Mammary epithelial cell (primary cell): ENCODE measurements at regions of chr3 and their contacts with region 1.

Region 1: DNA sequence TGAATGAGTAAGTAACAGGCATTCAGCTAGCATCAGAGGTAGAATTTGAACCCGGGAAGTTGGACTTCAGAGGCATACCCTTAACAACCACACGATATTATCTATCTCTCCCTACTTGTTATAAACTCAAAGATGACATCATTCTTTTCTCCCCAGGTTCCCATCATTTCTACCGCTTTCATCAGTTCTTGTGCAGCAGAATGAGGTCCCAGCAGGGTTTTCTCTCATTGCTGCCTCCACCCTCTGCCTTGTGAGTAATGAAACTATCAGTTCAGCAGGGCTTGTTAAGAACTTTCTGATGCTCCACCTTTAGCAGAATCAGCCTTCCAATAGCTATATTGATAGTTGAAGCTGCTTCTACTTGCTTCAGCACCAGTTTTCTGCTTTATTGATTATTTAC is 487.5 kb upstream of the KCNMB2 start:
- DNase-seq: no peak
- H3K4me3 ChIP-seq: no peak overlapping the region
- H3K27ac ChIP-seq: no peak overlapping the region
- H3K4me1 ChIP-seq: no peaks in the 10 kb centered on the region
- H3K27me3 ChIP-seq: no peaks in the 10 kb centered on the region
- CTCF ChIP-seq: no peak

Region 2: DNA sequence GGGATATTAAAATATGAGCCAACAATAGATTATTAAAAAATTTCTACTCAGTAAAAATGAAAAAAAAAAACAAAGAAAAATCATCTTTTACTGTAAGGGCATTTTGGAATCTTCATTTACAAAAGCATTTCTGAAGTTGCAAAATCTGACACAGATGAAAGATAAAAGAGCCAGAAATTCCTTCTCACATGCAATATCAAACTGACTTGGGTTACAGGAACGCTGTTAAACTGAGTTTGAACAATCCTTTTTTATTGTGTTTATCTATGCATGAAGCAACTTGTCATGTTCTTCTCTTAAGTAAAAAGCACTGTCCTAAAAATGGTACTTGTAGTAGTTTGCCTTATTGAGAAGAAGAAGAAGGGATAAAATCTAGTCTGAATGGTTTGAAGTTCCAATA is 19.0 kb after region 1 on chr3:
- CTCF ChIA-PET with region 1: no interaction called
- dilution Hi-C with region 1: no loop called
- in situ Hi-C with region 1: no loop called
- intact Hi-C with region 1: loop called (anchors 1 kb)
- DNase-seq: peak; percentile 38
- H3K4me3 ChIP-seq: no peak overlapping the region
- H3K27ac ChIP-seq: no peak overlapping the region
- H3K4me1 ChIP-seq: no peaks in the 10 kb centered on the region
- H3K27me3 ChIP-seq: no peaks in the 10 kb centered on the region
- CTCF ChIP-seq: no peak

Region 3: GRCh38 chr3:178195824-178196223 is 147.1 kb after region 1 on chr3:
- CTCF ChIA-PET with region 1: no interaction called
- dilution Hi-C with region 1: no loop called
- in situ Hi-C with region 1: no loop called
- intact Hi-C with region 1: no loop called
- DNase-seq: peak; percentile 71
- H3K4me3 ChIP-seq: no peak overlapping the region
- H3K27ac ChIP-seq: no peak overlapping the region
- H3K4me1 ChIP-seq: peaks cover 24% of the 10 kb centered on the region
- H3K27me3 ChIP-seq: no peaks in the 10 kb centered on the region
- CTCF ChIP-seq: no peak